ENCODE measurements at regions of chr6 and their contacts with region 1.

Region 1: GRCh38 chr6:44052419-44053023 is 74.7 kb downstream of the MRPL14 start:
- DNase-seq: peak; percentile 72 to 80
- ATAC-seq: peak; percentile 85 to 92 (median 92)
- H3K4me3 ChIP-seq: no peak overlapping the region
- H3K27ac ChIP-seq: peak overlapping the region; percentile 70
- H3K4me1 ChIP-seq: peaks cover 46% of the 10 kb centered on the region
- H3K27me3 ChIP-seq: no peaks in the 10 kb centered on the region
- CTCF ChIP-seq: no peak

Region 2: GRCh38 chr6:44010411-44011349 is 41.8 kb before region 1 on chr6:
- intact Hi-C with region 1: loop called in 1 of 2 experiments (anchors 5 kb)
- DNase-seq: peak; percentile 51 to 85
- ATAC-seq: peak; percentile 89 to 96 (median 94)
- H3K4me3 ChIP-seq: no peak overlapping the region
- H3K27ac ChIP-seq: peak overlapping the region; percentile 87
- H3K4me1 ChIP-seq: peaks cover 34% of the 10 kb centered on the region
- H3K27me3 ChIP-seq: no peaks in the 10 kb centered on the region
- CTCF ChIP-seq: no peak

Region 3: GRCh38 chr6:44593539-44593944 is 541.0 kb after region 1 on chr6:
- intact Hi-C with region 1: no loop called
- DNase-seq: no peak
- ATAC-seq: no peak
- H3K4me3 ChIP-seq: no peak overlapping the region
- H3K27ac ChIP-seq: no peak overlapping the region
- H3K4me1 ChIP-seq: no peaks in the 10 kb centered on the region
- H3K27me3 ChIP-seq: peaks cover 0 to 3% (median 0%) of the 10 kb centered on the region in 3 donors
- CTCF ChIP-seq: peak; percentile 24

Region 4: GRCh38 chr6:44606504-44606903 is 554.0 kb after region 1 on chr6:
- intact Hi-C with region 1: no loop called
- DNase-seq: no peak
- ATAC-seq: no peak
- H3K4me3 ChIP-seq: no peak overlapping the region
- H3K27ac ChIP-seq: no peak overlapping the region
- H3K4me1 ChIP-seq: no peaks in the 10 kb centered on the region
- H3K27me3 ChIP-seq: no peaks in the 10 kb centered on the region
- CTCF ChIP-seq: no peak

Measured in psoas muscle (tissue), 8 donors.